Dorsolateral prefrontal cortex (tissue), 120 donors: ENCODE measurements at regions of chr4 and their contacts with region 1.

Region 1: GRCh38 chr4:92387459-92388069 is 83.8 kb downstream of the GRID2 start:
- DNase-seq: peak in 1 of 10 donors; percentile 12
- H3K4me3 ChIP-seq: no peak overlapping the region
- H3K27ac ChIP-seq: no peak overlapping the region
- H3K27me3 ChIP-seq: no peaks in the 10 kb centered on the region
- CTCF ChIP-seq: peak; percentile 40 to 79 (median 64)

Region 2: DNA sequence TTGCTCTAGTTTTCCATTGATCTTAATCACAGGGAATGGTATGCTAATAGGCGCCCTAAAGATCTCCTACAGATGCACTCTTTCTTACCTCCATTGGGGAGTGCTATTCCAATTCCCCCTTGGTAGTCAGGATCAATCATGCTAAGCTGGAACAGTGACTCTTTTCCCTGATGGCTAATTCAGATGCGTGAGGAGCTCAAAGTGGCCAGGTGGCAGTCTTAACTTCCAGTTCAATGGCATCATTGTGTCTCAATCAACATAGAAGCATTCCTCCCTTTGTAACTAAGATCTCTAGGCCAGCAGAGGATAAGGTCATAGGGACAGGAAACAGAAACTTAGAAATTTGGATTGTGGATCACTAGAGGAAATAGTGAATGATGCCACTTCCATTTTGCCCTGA is 133.0 kb after region 1 on chr4:
- intact Hi-C with region 1: no loop called
- DNase-seq: no peak
- H3K4me3 ChIP-seq: no peak overlapping the region
- H3K27ac ChIP-seq: no peak overlapping the region
- H3K27me3 ChIP-seq: no peaks in the 10 kb centered on the region
- CTCF ChIP-seq: no peak

Region 3: DNA sequence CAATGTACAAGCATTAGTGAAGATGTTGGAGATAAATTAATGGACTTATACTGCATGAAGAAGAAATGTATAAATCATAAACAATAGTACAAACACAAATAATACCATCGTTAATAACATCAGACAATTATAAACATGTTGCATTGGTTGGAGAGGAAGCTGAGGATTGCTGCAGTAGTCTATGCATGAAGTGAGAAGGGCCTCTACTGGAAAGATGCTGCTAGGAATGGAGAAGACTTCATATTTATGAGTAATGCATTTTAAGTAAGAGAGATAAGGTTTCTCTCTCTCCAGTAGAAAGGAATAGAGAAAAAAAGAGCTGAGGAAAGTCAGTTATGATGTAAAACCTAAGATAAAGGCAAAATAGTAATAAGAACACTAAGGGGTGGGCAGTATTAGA is 164.1 kb after region 1 on chr4:
- intact Hi-C with region 1: loop called in 1 of 2 experiments (anchors 10 kb)
- DNase-seq: no peak
- H3K4me3 ChIP-seq: peak overlapping the region in 1 of 59 donors; percentile 18
- H3K27ac ChIP-seq: peak overlapping the region in 1 of 59 donors; percentile 29
- H3K27me3 ChIP-seq: no peaks in the 10 kb centered on the region
- CTCF ChIP-seq: peak in 12 of 56 donors; percentile 12 to 59 (median 34)